AG04450 (cell line): ENCODE measurements at regions of chr12 and their contacts with region 1.

Region 1: DNA sequence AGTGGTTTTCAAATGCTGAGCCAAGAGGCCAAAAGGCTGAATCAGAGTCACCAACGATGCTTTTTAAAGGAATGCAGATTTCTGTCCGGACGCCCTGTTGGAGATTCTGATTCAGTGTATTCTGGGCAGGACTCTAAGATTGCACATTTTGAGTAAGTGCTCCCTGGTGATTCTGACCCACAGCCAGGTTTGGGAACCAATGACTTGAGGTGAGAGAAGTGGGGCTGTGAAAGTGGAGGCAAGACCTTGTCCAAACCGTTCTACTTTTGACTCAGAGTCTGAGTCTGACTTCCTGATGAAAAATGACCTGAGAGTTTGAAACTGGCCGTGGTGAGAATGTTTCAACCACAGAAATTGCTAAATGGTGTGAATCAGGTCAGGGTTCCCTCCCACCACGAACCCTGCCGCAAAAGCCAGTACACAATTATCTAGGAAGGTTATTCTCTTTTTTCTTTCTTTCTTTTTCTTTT is 90.2 kb downstream of the NTN4 start:
- DNase-seq: peak; percentile 42
- H3K4me3 ChIP-seq: no peak overlapping the region
- H3K27ac ChIP-seq: peak overlapping the region; percentile 39
- H3K27me3 ChIP-seq: no peaks in the 10 kb centered on the region
- CTCF ChIP-seq: no peak

Region 2: DNA sequence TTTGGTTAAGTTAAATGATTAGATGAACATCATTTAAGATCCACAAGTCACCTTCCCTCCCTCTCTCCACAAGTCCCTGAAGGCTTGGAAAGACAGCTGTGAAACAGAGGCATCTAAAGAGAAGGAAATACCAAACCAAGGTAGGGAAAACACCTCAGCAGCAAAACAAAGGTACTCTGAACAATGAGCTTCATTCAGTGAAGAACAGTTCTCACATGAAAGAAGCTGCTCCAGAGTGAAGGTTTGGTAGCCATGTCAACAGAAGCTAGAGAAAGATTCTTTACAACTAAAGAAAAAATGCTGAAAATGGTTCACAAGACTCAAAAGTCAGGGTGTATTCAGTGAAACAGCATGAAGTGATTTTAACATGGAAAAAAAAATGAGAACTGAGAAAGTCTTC is 552.5 kb before region 1 on chr12:
- CTCF ChIA-PET with region 1: no interaction called
- POLR2A ChIA-PET with region 1: no interaction called
- DNase-seq: no peak
- H3K4me3 ChIP-seq: no peak overlapping the region
- H3K27ac ChIP-seq: no peak overlapping the region
- H3K27me3 ChIP-seq: no peaks in the 10 kb centered on the region
- CTCF ChIP-seq: no peak

Region 3: DNA sequence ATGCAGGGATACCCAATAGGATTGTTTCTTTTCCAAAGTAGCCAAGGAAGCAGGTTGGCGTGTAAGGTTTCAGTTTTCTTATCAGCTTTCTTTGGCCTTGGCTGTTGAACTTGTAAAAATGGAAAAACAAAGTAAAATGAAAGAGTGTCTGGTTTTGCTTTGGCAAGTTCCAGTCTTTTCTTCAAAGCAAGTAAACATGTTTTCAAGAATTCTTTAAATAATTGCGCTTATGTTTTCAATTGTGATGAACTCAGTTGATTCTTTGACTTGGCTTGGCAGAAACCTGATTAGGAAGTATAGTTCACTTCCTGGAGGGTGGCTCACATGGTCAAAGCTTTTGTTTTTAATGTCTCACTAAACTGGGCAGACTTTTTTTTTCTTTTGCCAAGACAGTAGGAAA is 36.8 kb before region 1 on chr12:
- CTCF ChIA-PET with region 1: no interaction called
- POLR2A ChIA-PET with region 1: no interaction called
- DNase-seq: no peak
- H3K4me3 ChIP-seq: no peak overlapping the region
- H3K27ac ChIP-seq: no peak overlapping the region
- H3K27me3 ChIP-seq: no peaks in the 10 kb centered on the region
- CTCF ChIP-seq: no peak

Region 4: GRCh38 chr12:95733141-95733825 is 32.9 kb after region 1 on chr12:
- CTCF ChIA-PET with region 1: no interaction called
- POLR2A ChIA-PET with region 1: interaction called, 13 read pairs
- DNase-seq: peak; percentile 82
- H3K4me3 ChIP-seq: no peak overlapping the region
- H3K27ac ChIP-seq: peak overlapping the region; percentile 47
- H3K27me3 ChIP-seq: no peaks in the 10 kb centered on the region
- CTCF ChIP-seq: no peak